ENCODE measurements at regions of chr4 and their contacts with region 1.

Region 1: DNA sequence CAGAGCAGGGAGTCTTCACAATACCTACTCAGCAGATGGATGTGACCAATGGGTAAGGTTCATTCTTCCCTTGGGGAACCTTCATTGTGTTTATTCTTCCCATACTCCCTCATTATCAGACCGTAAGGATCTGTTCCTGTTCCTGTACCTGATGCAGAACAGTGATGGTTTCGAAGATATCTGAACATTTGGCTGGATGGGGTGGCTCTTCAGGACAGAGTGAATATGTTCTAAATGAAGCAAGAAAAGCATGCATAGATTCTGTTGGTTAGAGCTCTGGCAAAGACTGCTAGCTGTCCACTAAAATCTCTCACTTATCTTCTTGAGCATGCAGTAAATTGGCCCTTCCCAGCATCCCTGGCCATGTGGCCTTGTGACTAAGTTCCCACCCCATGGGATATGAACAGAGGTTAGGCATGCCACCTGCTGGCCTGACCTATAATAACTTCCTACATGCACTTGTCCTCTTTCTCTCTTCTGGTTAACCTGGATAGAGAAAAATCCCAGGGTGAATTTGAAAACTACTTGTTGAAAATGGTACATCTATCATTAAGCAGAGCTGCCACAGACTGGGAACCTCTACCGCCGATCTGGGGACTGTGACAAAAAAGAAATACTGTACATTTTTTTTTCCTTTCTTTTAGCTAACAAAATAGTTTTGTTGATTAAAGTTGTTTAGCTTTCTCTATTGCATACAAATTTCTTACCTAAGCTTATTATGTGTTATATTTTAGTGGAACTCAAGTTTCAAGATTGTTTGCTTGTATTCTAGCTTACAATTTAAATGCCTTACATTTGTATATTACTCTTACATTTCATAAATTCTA is 60.0 kb upstream of the BANK1 start:
- DNase-seq: peak; percentile 60
- H3K4me3 Mint-ChIP-seq: no peak overlapping the region
- H3K27ac Mint-ChIP-seq: no peak overlapping the region
- H3K4me1 Mint-ChIP-seq: no peaks in the 10 kb centered on the region
- H3K27me3 Mint-ChIP-seq: no peaks in the 10 kb centered on the region
- CTCF ChIP-seq: peak; percentile 31

Region 2: GRCh38 chr4:101169044-101170014 is 561.2 kb before region 1 on chr4:
- CTCF ChIA-PET with region 1: interaction called, 3 read pairs
- intact Hi-C with region 1: loop called (anchors 1 kb)
- DNase-seq: peak; percentile 58
- H3K4me3 Mint-ChIP-seq: no peak overlapping the region
- H3K27ac Mint-ChIP-seq: no peak overlapping the region
- H3K4me1 Mint-ChIP-seq: no peaks in the 10 kb centered on the region
- H3K27me3 Mint-ChIP-seq: no peaks in the 10 kb centered on the region
- CTCF ChIP-seq: peak; percentile 58

Region 3: GRCh38 chr4:101187841-101188240 is 542.7 kb before region 1 on chr4:
- CTCF ChIA-PET with region 1: no interaction called
- intact Hi-C with region 1: loop called (anchors 5 kb)
- DNase-seq: no peak
- H3K4me3 Mint-ChIP-seq: no peak overlapping the region
- H3K27ac Mint-ChIP-seq: no peak overlapping the region
- H3K4me1 Mint-ChIP-seq: peaks cover 18% of the 10 kb centered on the region
- H3K27me3 Mint-ChIP-seq: no peaks in the 10 kb centered on the region
- CTCF ChIP-seq: peak; percentile 15

Region 4: DNA sequence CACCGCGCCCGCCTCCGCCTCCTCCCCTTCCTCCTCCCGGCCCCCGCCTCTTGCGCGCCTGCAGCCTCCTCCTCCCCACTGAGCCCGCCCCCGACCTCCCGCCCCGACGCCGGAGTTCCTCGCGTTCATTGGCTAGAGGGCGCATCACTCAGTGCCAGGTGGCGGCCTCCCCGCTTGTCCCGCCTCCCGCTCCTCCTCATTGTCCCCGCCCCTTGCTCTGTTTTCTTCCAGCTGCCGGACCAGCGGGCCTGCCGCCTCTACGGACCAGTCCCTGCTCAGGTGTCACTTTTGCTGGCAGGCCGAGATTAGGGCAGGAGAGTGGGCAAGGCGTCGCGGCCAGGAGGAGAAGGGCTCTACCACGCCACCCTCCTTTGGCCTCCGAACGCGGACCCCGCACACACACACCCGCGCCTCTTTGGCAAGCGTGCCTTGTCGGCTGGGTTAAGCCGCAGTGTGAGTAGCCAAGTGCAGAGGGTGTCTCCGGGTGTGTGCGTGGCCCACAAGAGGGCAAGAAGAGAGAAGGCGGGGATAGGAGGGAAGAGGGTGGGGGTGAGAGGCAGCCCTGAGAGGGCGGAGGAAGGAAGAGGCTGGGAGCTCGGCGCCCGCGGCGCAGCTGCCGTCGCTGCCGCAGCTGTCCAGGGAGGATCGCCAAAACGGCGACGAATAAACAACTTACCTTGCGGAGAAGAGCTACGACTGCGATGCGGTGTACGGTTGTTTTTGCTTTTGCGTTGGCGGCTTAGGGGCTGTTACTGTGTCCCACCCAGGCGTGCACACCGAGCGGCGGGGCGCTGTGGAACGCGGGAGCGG is 382.7 kb before region 1 on chr4:
- CTCF ChIA-PET with region 1: no interaction called
- intact Hi-C with region 1: loop called (anchors 5 kb)
- DNase-seq: peak; percentile 95
- H3K4me3 Mint-ChIP-seq: peak overlapping the region; percentile 99
- H3K27ac Mint-ChIP-seq: peak overlapping the region; percentile 84
- H3K4me1 Mint-ChIP-seq: peaks cover 44% of the 10 kb centered on the region
- H3K27me3 Mint-ChIP-seq: no peaks in the 10 kb centered on the region
- CTCF ChIP-seq: no peak

Region 5: DNA sequence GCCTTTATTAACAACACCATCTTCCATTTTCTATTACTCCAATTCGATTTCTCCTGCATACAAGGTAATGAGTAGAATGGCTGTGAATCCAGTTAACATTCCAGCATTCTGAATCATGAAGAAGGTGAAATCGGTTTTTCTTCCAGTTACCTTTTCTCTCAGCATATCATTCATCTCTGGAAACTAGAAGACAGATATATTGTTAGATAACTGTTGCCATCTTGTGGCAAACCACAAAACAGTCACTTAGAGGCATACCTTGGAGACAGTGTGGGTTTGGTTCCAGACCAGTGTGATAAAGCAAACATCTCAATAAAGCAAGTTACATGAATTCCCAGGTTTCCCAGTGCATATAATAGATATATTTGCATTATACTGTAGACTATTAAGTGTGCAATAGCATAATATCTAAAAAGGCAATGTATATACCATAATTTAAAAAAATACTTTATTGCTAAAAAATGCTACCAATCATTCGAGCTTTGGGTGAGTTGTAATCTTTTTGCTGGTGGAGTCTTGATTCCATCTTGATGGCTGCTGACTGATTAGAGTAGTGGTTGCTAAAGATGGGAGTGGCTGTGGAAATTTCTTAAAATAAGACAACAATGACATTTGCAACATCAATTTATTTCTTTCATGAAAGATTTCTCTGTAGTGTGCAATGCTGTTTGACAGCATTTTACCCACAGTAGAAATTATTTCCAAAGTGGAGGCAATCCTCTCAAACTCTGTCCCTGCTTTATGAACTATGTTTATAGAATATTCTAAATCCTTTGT is 532.7 kb after region 1 on chr4:
- CTCF ChIA-PET with region 1: no interaction called
- intact Hi-C with region 1: loop called (anchors 5 kb)
- DNase-seq: peak; percentile 6
- H3K4me3 Mint-ChIP-seq: no peak overlapping the region
- H3K27ac Mint-ChIP-seq: peak overlapping the region; percentile 26
- H3K4me1 Mint-ChIP-seq: no peaks in the 10 kb centered on the region
- H3K27me3 Mint-ChIP-seq: no peaks in the 10 kb centered on the region
- CTCF ChIP-seq: peak; percentile 13

Measured in Calu3 (cell line).